OCI-LY7 (cell line): ENCODE measurements at regions of chr14 and their contacts with region 1.

Region 1: GRCh38 chr14:101809671-101810514 is 48.4 kb downstream of the PPP2R5C start:
- DNase-seq: peak; percentile 96
- H3K4me3 ChIP-seq: peak overlapping the region; percentile 88
- H3K27ac ChIP-seq: peak overlapping the region; percentile 98
- H3K4me1 ChIP-seq: peaks cover 50% of the 10 kb centered on the region
- CTCF ChIP-seq: no peak

Region 2: GRCh38 chr14:101791919-101792572 is 17.8 kb before region 1 on chr14:
- CTCF ChIA-PET with region 1: interaction called, 3 read pairs
- POLR2A ChIA-PET with region 1: interaction called, 68 read pairs
- intact Hi-C with region 1: loop called (anchors 1 kb)
- DNase-seq: peak; percentile 37
- H3K4me3 ChIP-seq: peak overlapping the region; percentile 56
- H3K27ac ChIP-seq: peak overlapping the region; percentile 52
- H3K4me1 ChIP-seq: peaks cover 48% of the 10 kb centered on the region
- CTCF ChIP-seq: 0 out of 2 replicates have a peak, but pooled peaks have one; percentile 34

Region 3: DNA sequence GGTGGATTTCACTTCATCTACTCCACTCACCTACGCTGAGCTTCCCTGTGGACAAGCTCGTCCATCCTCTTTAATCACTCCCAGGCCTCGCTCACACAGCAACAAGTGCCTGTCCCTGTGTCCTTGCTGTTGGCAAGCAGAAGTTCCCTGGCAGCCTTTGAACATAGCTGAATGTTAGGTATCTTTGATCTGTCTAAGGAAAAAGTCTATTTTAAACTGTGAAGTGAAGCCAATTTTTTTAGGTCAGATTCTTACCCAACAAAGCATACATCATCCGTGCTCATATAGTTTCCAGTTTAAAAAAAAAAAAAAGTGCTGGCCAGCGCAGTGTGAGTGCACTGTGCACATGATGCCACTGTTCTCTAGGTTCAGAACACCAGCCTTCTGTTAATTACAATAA is 12.0 kb before region 1 on chr14:
- CTCF ChIA-PET with region 1: no interaction called
- POLR2A ChIA-PET with region 1: interaction called, 68 read pairs
- intact Hi-C with region 1: no loop called
- DNase-seq: no peak
- H3K4me3 ChIP-seq: no peak overlapping the region
- H3K27ac ChIP-seq: no peak overlapping the region
- H3K4me1 ChIP-seq: no peaks in the 10 kb centered on the region
- CTCF ChIP-seq: no peak

Region 4: GRCh38 chr14:101823511-101824120 is 13.7 kb after region 1 on chr14:
- CTCF ChIA-PET with region 1: interaction called, 5 read pairs
- POLR2A ChIA-PET with region 1: interaction called, 111 read pairs
- intact Hi-C with region 1: loop called (anchors 2 kb)
- DNase-seq: peak; percentile 46
- H3K4me3 ChIP-seq: peak overlapping the region; percentile 71
- H3K27ac ChIP-seq: peak overlapping the region; percentile 93
- H3K4me1 ChIP-seq: peaks cover 89% of the 10 kb centered on the region
- CTCF ChIP-seq: no peak

Region 5: DNA sequence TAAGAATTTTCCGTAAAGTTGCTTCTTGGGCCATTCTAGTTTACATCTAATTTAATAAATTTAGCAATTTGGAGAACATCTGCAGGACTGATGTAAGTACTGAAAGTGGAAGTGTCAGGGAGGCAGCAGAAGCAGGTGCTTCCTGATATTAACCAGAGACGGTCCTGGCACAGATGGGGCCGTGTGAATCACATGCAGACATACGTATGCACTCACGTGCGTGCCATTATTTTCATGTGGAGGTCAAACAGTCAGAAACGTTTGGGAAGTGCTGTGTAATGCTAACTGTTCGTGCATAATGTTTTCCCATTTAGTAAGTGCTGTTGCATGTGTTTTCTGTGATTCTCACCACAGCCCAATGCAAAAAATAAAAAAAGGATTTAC is 66.7 kb after region 1 on chr14:
- CTCF ChIA-PET with region 1: no interaction called
- POLR2A ChIA-PET with region 1: interaction called, 9 read pairs
- intact Hi-C with region 1: loop called (anchors 5 kb)
- DNase-seq: peak; percentile 97
- H3K4me3 ChIP-seq: peak overlapping the region; percentile 63
- H3K27ac ChIP-seq: peak overlapping the region; percentile 98
- H3K4me1 ChIP-seq: peaks cover 74% of the 10 kb centered on the region
- CTCF ChIP-seq: no peak